GM10248 (cell line): ENCODE measurements at regions of chr1 and their contacts with region 1.

Region 1: DNA sequence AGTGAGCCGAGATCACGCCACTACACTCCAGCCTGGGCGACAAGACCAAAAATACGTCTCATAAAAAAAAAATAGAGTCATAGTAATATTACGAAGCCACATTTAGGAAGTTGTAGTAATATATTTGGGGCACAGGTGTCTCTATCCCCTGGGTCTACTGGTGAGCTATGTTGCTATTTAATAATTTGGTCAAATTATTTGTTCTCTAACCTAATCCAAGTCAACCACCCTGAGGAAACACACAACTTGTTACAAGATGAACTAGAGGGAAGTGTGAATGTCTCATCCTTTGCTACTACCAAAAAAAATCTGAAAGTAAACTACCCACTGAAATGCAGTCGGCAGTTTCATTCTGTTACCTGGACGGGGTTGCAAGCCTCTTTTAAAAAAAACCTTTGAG is 35.3 kb downstream of the RGS8 start:
- DNase-seq: peak; percentile 37
- CTCF ChIP-seq: no peak

Region 2: GRCh38 chr1:182622901-182623528 is 26.0 kb before region 1 on chr1:
- CTCF ChIA-PET with region 1: interaction called, 10 read pairs
- POLR2A ChIA-PET with region 1: no interaction called
- DNase-seq: no peak
- CTCF ChIP-seq: no peak

Region 3: GRCh38 chr1:182662121-182662890 is 13.3 kb after region 1 on chr1:
- CTCF ChIA-PET with region 1: interaction called, 47 read pairs
- POLR2A ChIA-PET with region 1: no interaction called
- DNase-seq: no peak
- CTCF ChIP-seq: no peak

Region 4: GRCh38 chr1:183106746-183107145 is 457.7 kb after region 1 on chr1:
- CTCF ChIA-PET with region 1: no interaction called
- POLR2A ChIA-PET with region 1: no interaction called
- DNase-seq: no peak
- CTCF ChIP-seq: no peak